Thyroid gland (tissue), 4 donors: ENCODE measurements at regions of chr7 and their contacts with region 1.

Region 1: DNA sequence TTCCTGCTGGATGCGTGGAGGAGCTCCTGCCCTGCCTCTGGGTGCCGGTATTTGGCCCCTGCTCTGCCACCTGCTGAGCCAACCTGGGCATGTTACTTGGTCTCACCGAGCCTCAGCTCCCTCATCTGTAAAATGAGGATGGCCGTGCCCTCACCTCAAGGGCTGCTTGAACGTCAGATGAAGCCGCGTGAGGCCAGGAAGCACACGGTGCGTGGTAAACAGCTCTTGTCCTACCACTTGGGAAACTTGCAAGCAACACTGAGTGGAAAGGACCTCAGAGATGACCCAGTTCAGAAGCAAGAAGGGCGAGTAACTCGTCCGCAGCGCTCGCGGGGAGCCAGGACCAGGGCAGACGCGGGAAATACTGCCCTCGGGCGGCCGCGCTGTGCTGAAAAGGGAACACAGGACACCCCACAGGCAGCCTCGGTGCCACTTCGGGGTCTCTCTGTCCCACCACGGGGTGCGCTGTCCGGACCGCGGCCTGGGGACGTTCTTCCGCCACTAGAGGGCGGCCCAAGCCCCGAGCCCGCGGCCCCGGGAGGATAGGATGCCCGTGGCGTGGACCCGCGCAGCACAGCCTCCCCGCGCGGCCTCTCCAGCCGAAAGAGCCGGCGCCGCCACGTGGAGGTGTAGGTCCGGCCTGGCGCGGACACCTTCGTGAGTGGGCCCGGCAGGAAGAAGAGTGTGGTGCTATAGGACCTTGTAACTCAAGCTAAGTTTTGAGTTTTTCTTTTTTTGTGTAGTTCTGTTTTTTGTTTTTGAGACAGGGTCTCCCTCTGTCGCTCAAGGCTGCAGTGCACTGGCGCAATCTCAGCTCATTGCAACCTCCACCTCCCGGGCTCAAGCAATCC is 94.1 kb downstream of the PRKAG2 start:
- DNase-seq: peak; percentile 79 to 84
- H3K4me3 ChIP-seq: peak overlapping the region in 1 of 3 donors; percentile 12
- H3K27ac ChIP-seq: peak overlapping the region; percentile 1 to 50 (median 12)
- H3K4me1 ChIP-seq: peaks cover 0 to 9% of the 10 kb centered on the region in 2 donors
- H3K27me3 ChIP-seq: no peaks in the 10 kb centered on the region
- CTCF ChIP-seq: peak; percentile 73 to 92 (median 85)
- POLR2A ChIP-seq: no peak

Region 2: GRCh38 chr7:151868396-151869108 is 85.7 kb after region 1 on chr7:
- intact Hi-C with region 1: loop called (anchors 5 kb)
- DNase-seq: no peak
- H3K4me3 ChIP-seq: no peak overlapping the region
- H3K27ac ChIP-seq: peak overlapping the region; percentile 75 to 86 (median 80)
- H3K4me1 ChIP-seq: peaks cover 24 to 34% of the 10 kb centered on the region in 2 donors
- H3K27me3 ChIP-seq: no peaks in the 10 kb centered on the region
- CTCF ChIP-seq: no peak
- POLR2A ChIP-seq: no peak

Region 3: DNA sequence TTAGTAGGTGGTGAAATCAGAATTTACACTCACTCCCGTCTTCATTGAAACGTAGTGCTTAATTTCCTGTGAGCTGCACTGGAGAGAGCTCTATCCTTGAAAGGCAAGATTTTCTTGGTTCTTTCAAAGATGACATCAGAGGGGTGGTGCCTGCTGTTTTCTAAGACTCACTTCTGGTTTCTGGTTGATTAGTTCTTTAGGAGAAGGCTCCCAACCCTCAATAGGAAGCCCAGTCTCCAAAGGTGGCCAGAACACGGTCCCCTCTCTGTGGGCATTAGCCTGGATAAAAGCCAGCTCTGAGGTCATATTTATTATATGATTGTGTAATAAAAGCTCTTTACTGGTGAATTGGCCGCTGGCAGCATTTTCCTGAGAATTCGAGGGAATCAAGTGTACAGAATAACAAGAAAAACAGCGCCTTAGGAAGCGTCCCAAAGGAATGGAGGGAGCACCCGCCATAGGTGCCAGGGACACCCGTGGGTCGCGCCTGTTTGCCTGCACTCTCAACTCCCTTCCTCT is 149.6 kb after region 1 on chr7:
- intact Hi-C with region 1: loop called (anchors 5 kb)
- DNase-seq: no peak
- H3K4me3 ChIP-seq: no peak overlapping the region
- H3K27ac ChIP-seq: no peak overlapping the region
- H3K4me1 ChIP-seq: no peaks in the 10 kb centered on the region
- H3K27me3 ChIP-seq: no peaks in the 10 kb centered on the region
- CTCF ChIP-seq: no peak
- POLR2A ChIP-seq: no peak